Activated T-helper 2 cell treated with anti-CD3 and anti-CD28 coated beads, Interferon-gamma antibody, Interleukin-2, Interleukin-4, amounts not matched to agents 10 μg/mL and 5 μg/mL and 100 μg/mL, durations not matched to agents 14 hours and 24 hours and 36 hours (primary cell): ENCODE measurements at regions of chr6 and their contacts with region 1.

Region 1: DNA sequence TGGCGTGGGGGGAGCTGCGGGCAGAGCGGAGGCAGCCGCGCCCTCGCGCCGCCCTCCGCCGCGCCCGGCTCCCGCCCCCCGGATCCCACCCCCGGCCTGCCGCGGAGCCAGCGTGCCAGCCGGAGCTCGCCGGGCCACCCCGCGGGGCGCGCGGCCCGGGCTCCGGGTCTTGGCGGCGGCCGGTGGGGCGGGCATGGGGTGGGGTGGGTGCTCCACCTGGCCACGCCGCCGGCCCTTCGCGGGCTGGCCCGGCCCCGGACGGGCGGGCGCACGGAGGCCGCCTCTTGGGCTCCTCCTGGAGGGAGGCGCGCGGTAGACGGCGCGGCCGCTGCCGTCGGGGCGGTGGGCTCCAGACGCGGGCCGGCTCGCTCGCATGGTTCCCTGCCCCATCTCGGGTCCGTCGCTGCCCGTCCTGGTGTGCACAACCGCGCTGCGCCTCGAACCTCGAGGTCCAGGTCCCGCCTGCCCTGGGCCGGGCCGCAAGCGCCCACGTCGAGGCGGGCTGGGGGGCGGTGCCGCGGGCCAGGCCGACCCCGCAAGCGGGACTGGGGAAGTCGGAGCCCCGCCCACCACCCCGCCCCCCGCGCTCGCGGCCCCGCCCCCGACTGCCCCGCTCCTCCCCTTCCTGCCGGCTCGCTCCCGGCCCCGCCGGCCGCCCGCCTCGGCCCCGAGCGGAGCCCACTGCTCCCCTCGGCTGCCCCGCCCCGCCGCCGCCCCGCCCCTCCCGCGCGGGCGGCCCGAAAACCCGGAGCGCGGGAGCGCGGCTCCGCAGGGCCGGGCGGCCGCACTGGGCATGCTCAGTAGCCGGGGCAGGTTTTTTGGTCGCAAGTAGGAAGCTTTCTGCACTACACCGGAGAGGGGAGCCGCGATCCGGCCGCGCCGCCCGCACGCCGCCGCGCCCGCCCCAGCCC is at the start of gene CDYL:
- DNase-seq: peak; percentile 86
- H3K4me3 Mint-ChIP-seq: peak within 1 kb of the TSS; percentile 87
- H3K27ac Mint-ChIP-seq: peak within 1 kb of the TSS; percentile 82
- H3K4me1 Mint-ChIP-seq: peaks cover 49% of the 10 kb centered on the region
- H3K27me3 Mint-ChIP-seq: peaks cover 28% of the 10 kb centered on the region
- total RNA-seq, gene CDYL: 40.0 and 40.9 TPM in 2 replicates

Region 2: DNA sequence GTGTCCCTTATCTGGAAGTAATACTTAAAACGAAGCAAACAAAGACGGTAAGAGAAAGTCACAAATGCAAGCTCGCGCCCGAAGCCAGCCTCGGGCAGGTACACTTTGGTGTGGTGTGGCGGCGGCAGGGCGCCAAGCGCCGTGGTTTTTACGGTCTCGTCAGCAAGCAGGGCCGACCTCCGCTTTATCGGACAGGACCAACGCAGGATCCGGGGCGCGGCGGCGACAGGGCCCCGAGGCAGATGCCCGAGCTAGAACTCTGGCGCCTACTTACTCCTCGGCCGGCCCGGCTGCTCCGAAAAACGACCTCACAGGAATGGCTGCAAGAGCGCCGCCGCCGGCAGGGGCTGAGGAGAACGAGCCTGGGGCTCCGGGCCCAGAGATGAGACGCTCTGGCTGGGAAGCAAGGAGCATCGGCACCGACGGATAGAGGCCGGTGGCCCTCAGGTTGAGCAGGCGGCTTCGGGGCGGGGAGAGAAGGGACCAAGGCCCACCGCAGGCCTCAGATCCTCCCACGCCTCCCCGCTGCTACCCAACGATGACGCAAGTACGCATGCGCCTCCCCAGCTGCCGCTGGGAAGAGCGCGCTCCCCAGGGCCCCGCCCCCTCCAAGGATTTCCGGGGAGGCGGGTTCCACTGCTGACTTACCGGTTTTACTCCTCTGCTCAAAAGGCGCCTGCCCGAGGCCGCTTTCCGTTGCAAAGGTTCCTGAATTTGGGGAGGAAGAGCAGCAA is 757.5 kb before region 1 on chr6:
- intact Hi-C with region 1: loop called (anchors 10 kb)
- DNase-seq: peak; percentile 95
- H3K4me3 Mint-ChIP-seq: peak overlapping the region; percentile 98
- H3K27ac Mint-ChIP-seq: peak overlapping the region; percentile 99
- H3K4me1 Mint-ChIP-seq: peaks cover 46% of the 10 kb centered on the region
- H3K27me3 Mint-ChIP-seq: no peaks in the 10 kb centered on the region

Region 3: GRCh38 chr6:4637691-4638433 is 138.0 kb before region 1 on chr6:
- intact Hi-C with region 1: loop called (anchors 5 kb)
- DNase-seq: no peak
- H3K4me3 Mint-ChIP-seq: no peak overlapping the region
- H3K27ac Mint-ChIP-seq: peak overlapping the region; percentile 73
- H3K4me1 Mint-ChIP-seq: peaks cover 21% of the 10 kb centered on the region
- H3K27me3 Mint-ChIP-seq: no peaks in the 10 kb centered on the region

Region 4: DNA sequence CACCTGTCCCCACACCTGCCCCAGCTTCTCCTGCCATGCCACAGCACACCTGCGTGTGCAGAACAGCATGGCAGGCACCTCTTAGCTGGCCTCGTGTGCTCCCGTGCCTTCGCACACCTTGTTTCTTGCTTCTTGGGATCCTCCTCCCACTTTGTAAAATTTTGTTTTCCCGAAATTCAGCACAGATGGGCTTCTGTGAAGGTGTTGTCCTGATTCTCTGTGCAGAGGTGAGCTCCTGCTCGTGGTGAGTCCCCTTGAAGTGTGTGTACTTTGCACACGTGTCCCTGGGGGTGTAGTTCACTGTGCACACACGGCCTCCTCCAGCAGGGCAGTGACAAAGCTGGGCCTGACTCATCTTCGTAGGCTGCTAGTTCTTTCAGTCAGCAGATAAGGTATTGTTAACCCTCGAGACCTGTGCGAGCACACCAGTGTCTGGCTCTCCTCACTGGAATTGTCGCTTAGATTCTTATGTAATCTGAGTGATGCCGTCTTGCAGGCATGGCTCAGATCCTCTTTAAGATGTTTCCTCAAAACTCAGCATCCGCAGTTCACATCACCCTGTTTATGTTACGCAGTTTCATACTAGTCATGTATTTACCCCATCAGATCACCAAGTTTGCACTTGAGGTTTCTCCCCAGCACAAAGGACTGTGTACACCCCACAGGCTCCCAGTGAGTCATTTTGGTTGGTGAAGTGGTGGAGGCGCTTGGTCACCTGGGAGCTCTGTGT is 78.1 kb after region 1 on chr6:
- intact Hi-C with region 1: loop called (anchors 5 kb)
- DNase-seq: no peak
- H3K4me3 Mint-ChIP-seq: no peak overlapping the region
- H3K27ac Mint-ChIP-seq: no peak overlapping the region
- H3K4me1 Mint-ChIP-seq: peaks cover 26% of the 10 kb centered on the region
- H3K27me3 Mint-ChIP-seq: no peaks in the 10 kb centered on the region

Region 5: DNA sequence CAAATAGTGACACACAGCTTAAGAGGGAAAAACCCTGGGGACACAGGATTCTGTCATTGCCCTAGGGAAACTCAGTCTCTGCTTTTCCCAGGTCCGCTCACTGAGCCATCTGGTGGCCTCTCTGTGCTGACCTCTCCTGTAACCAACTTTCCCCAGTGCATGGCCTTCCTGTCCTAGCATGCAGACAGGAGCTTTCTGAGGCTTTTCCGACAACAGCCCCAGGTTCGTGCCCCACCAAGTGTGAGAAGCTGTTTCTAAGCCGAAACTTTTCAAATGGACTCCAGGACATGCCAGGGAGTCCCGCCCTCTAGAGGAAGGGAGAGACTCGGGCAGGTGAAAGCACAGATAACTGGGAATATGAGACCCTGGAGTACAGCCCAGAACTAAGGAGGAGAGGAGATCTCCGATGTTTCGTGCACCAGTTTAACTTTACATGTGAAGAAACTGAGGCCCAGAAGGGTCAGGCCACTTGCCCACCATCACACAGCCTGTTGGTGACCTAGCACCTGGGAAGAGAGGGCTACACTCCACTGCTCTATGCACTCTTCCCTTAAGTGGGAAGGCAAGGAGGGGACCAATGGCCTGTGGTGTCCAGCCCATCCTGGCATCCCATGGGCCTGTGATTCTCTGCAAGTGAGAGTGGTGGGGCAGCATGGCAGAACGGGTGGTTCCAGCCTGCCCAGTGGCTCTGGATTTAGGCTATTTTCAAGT is 181.8 kb after region 1 on chr6:
- intact Hi-C with region 1: no loop called
- DNase-seq: no peak
- H3K4me3 Mint-ChIP-seq: no peak overlapping the region
- H3K27ac Mint-ChIP-seq: no peak overlapping the region
- H3K4me1 Mint-ChIP-seq: no peaks in the 10 kb centered on the region
- H3K27me3 Mint-ChIP-seq: no peaks in the 10 kb centered on the region

Region 6: DNA sequence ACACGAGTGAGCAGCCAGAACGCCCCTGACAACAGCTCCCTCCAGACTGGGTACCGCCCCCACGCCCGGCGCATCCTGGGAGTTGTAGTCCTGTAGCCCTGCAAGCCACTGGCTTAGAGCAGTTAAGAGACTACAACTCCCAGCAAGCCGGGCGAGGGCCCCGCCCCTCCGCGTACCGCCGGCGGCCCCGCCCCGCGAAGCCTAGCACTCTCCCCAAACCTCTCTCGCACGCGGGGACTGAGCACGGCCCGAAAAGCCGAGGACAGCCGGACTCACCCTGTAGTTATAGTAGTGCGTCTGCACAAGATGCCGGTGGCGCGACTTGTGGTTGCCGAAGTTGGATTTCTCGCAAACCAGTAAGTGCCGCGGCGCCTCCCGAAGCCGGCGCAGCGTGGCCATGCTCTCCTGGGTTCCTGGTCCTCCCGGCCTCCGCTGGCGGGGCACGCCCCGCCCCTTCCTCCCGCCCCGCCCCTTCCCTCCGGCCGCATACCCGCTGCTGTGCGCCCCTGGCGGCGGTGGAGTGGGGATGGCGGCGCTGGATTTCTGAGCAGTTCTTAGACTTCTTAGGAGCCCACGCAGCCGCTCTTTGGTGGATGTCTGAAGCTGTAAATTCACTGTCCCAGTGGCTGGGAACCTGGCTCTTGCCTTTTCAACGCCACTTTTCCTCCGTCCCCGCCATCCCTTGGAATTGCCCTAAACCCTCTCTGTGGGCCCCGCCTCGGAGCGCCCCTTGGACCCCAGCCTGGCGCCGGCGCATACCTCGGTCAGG is 227.9 kb after region 1 on chr6 and contains the start of gene RPP40:
- intact Hi-C with region 1: loop called (anchors 5 kb)
- DNase-seq: peak; percentile 97
- H3K4me3 Mint-ChIP-seq: peak within 1 kb of the TSS; percentile 91
- H3K27ac Mint-ChIP-seq: peak within 1 kb of the TSS; percentile 96
- H3K4me1 Mint-ChIP-seq: peaks cover 7% of the 10 kb centered on the region
- H3K27me3 Mint-ChIP-seq: no peaks in the 10 kb centered on the region
- total RNA-seq, gene RPP40: 11.7 and 12.2 TPM in 2 replicates